Activated CD4-positive, alpha-beta T cell treated with anti-CD3 and anti-CD28 coated beads for 36 hours (primary cell): ENCODE measurements at regions of chr16 and their contacts with region 1.

Region 1: GRCh38 chr16:11586856-11587642 is at the start of gene LITAF:
- DNase-seq: peak; percentile 74
- ATAC-seq: peak; percentile 53
- H3K4me3 Mint-ChIP-seq: peak within 1 kb of the TSS; percentile 89
- H3K27ac Mint-ChIP-seq: peak within 1 kb of the TSS; percentile 90
- H3K4me1 Mint-ChIP-seq: peaks cover 32% of the 10 kb centered on the region
- H3K27me3 Mint-ChIP-seq: no peaks in the 10 kb centered on the region
- total RNA-seq, gene LITAF: 99.0 to 116 TPM

Region 2: DNA sequence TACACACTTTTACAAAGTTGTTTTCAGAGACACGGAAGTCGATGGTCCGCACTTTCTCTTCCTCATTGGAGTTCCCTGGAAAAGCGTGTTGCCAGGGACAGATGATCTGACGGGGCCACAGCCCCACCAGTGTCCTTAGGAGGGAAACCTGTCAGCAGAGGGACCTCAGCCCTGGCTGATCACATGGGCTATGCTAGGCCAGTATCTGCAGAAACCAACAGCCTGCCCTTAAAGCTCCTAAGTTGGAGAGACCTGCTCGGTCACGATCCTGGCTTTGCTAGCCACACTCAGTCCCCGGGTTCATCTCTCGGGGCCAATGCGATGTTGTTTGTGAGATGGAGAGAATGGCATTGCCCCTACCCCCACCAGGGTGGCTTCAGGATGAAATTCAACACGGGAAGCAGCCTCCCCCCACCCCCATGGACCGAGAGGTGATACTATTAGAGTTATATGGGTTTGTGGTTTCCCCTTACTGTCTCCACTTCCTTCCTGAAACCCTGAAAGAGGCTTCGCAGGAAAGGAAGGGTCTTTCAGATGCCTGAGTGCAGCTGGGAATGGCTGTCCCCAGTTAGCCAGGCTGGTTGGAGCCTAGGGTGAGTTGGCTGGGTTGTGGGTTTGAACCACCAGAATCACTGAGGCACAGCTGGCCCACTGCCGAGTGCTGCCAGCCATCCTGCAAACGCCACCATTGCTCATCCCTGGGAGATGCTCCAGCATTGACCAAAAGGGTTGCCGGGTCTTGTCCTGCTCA is 225.2 kb before region 1 on chr16:
- CTCF ChIA-PET with region 1: no interaction called
- POLR2A ChIA-PET with region 1: no interaction called
- intact Hi-C with region 1: no loop called
- DNase-seq: peak; percentile 54
- ATAC-seq: peak; percentile 27
- H3K4me3 Mint-ChIP-seq: peak overlapping the region; percentile 45
- H3K27ac Mint-ChIP-seq: peak overlapping the region; percentile 61
- H3K4me1 Mint-ChIP-seq: peaks cover 60% of the 10 kb centered on the region
- H3K27me3 Mint-ChIP-seq: peaks cover 7% of the 10 kb centered on the region

Region 3: DNA sequence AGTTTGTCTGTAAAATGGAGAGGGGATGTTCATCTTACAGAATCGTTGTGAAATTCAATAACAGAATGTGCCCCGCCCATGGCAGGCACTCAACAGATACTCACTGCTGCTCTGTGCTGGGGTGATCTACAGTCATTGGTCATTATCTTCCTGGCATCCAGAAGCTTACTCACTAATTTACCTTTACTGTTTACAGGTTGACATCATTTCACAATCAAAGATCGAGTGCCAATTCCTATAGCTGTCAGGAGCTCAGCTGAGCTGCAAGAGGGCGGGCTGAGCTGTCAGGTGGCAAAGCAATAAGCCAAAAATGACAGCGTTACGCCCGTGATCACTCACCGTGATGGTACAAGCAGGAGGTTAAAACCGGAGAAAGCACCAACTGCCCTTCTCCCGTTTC is 51.6 kb before region 1 on chr16:
- CTCF ChIA-PET with region 1: interaction called, 9 read pairs
- POLR2A ChIA-PET with region 1: interaction called, 5 read pairs
- intact Hi-C with region 1: loop called (anchors 2 to 5 kb)
- DNase-seq: no peak
- ATAC-seq: no peak
- H3K4me3 Mint-ChIP-seq: no peak overlapping the region
- H3K27ac Mint-ChIP-seq: no peak overlapping the region
- H3K4me1 Mint-ChIP-seq: peaks cover 11% of the 10 kb centered on the region
- H3K27me3 Mint-ChIP-seq: no peaks in the 10 kb centered on the region

Region 4: DNA sequence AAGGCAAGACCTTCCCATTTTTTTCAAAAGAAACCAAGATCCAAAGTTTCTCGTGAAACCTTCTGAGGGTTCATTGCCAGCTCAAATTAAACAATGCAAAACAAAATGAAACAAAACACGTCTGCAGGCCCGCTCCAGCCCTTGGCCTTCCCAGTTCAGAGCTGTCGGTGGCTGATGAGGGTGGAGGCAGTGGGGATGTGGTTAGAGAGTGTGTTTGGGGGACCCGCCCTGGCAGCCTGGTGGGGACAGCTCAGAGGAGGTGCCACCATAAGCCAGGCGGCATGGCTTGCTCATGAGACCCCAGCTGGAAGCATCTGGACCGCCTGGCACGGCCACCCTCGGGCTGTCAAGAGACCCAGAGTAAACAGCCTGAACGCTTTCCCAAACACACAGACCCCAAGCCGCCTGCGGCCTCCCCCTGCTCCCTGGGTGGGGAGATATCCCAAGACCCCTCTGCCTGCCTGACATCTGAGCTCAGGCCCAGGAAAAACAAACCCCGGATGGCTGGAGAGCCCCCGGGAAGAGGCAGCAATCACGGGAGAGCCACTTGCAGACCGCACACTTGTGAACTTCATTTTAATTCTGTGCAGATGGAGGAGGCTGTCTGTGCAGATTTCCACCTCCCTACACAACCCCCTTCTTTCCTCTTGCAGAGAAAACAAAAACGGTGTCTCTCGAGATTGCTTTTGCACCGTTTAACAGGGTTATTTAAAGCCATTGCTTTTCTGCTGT is 35.0 kb after region 1 on chr16:
- CTCF ChIA-PET with region 1: interaction called, 5 read pairs
- POLR2A ChIA-PET with region 1: interaction called, 3 read pairs
- intact Hi-C with region 1: loop called (anchors 2 to 5 kb)
- DNase-seq: peak; percentile 53
- ATAC-seq: peak; percentile 68
- H3K4me3 Mint-ChIP-seq: peak overlapping the region; percentile 63
- H3K27ac Mint-ChIP-seq: peak overlapping the region; percentile 84
- H3K4me1 Mint-ChIP-seq: peaks cover 55% of the 10 kb centered on the region
- H3K27me3 Mint-ChIP-seq: no peaks in the 10 kb centered on the region

Region 5: DNA sequence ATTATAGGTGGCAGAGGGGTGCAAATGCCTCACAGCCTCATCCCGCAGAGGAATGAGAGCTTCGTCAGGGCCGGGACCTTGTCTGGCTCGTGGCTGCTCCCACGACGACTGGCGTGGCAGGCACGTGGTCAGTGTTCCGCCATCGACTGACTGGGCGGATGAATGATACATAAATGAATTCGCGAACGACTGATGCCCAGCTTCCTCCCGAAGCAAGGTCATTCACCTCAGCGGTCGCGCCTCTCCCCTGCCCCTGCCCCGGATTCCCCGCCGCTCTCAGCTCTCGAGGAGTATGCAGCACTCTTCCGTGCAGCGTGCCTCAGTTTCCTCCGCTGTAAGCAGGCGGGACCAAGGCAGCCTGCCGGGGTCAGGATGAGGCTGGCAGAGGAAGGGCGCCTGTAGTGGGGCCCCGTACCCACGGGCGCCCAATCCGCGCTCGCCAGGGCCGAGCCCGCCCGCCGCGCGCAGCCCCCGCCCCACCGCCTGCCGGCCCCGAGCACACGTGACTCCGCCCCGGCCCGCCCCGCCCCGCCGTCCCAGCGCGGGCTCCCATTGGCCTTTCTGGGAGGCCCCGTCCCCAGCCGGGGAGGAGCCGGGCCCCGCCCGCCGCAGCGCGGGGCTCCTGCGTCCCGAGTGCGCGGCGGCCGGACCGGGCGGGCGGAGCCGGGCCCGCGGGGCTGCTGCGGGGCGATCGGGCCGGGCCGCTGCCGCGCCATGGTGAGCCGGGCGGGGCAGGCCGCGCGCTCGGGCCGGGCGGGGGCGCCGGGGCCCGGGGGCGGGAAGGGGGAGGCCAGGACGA is 81.0 kb after region 1 on chr16 and contains the start of gene SNN:
- CTCF ChIA-PET with region 1: interaction called, 4 read pairs
- POLR2A ChIA-PET with region 1: no interaction called
- intact Hi-C with region 1: loop called in 1 of 2 experiments (anchors 2 kb)
- DNase-seq: peak; percentile 93
- ATAC-seq: peak; percentile 90
- H3K4me3 Mint-ChIP-seq: peak within 1 kb of the TSS; percentile 72
- H3K27ac Mint-ChIP-seq: no peak within 1 kb of the TSS
- H3K4me1 Mint-ChIP-seq: peaks cover 73% of the 10 kb centered on the region
- H3K27me3 Mint-ChIP-seq: no peaks in the 10 kb centered on the region
- total RNA-seq, gene SNN: 6.0 to 7.2 TPM

Region 6: DNA sequence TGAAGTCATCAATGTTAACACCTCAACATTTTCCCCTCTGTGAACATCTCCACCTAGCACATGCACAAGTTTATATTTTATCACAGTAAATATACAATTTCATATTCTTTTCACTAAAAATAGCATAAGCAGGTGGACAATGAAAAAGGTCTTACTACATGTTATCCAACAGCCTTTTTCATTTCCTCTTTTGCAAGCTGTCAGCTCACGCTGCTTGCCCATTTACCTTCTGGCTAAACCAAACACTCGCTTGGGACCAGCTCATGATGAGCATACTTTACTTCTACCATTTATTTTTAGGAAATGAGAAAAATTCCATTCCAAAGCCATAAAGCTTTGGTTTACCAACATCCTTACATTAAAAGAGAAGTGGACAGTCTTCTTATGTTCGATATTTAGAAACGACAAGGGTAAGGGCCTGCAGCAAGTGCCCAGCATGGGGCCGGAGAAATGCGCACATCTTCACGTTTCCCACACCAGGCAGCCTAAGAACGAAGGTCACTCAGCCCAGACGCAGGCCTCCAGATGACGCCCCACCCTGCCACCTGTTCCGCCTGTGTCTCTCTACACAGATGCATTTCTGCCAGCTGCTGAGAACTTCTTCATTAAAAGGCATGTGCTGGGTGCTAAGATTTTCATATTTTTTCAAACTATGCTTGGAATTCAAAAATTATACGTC is 95.1 kb after region 1 on chr16:
- CTCF ChIA-PET with region 1: no interaction called
- POLR2A ChIA-PET with region 1: no interaction called
- intact Hi-C with region 1: no loop called
- DNase-seq: no peak
- ATAC-seq: no peak
- H3K4me3 Mint-ChIP-seq: no peak overlapping the region
- H3K27ac Mint-ChIP-seq: peak overlapping the region; percentile 83
- H3K4me1 Mint-ChIP-seq: peaks cover 61% of the 10 kb centered on the region
- H3K27me3 Mint-ChIP-seq: no peaks in the 10 kb centered on the region

Region 7: GRCh38 chr16:11851294-11852091 is 264.4 kb after region 1 on chr16 and contains the start of gene RSL1D1:
- CTCF ChIA-PET with region 1: interaction called, 3 read pairs
- POLR2A ChIA-PET with region 1: no interaction called
- intact Hi-C with region 1: loop called in 1 of 2 experiments (anchors 2 kb)
- DNase-seq: peak; percentile 96
- ATAC-seq: peak; percentile 85
- H3K4me3 Mint-ChIP-seq: peak within 1 kb of the TSS; percentile 99
- H3K27ac Mint-ChIP-seq: peak within 1 kb of the TSS; percentile 96
- H3K4me1 Mint-ChIP-seq: peaks cover 52% of the 10 kb centered on the region
- H3K27me3 Mint-ChIP-seq: no peaks in the 10 kb centered on the region
- total RNA-seq, gene RSL1D1: 369 to 466 TPM